Calu3 (cell line): ENCODE measurements at regions of chr7 and their contacts with region 1.

Region 1: DNA sequence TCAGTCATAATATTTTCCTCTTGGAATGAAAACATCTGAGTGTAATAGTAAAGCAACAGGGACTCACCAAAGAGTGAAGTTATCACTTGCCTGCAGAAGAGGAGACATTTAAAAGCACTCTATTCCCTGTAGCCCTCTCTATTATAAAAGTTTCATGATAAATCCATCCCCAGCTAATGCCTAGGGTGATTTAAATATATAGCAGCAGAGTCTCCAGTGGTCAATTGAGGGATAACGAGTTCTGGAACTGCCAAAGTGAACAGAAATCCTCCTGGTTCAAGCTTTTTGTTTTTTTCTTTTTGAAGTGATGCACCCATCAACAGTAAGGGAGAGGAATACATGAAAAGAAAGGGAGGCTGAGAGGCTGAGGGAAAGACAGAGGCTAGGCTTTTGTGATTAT is 87.3 kb downstream of the EVX1 start:
- DNase-seq: no peak
- H3K4me3 Mint-ChIP-seq: no peak overlapping the region
- H3K27ac Mint-ChIP-seq: no peak overlapping the region
- H3K4me1 Mint-ChIP-seq: no peaks in the 10 kb centered on the region
- H3K27me3 Mint-ChIP-seq: no peaks in the 10 kb centered on the region
- CTCF ChIP-seq: peak; percentile 46

Region 2: GRCh38 chr7:27314111-27314510 is 15.8 kb before region 1 on chr7:
- CTCF ChIA-PET with region 1: interaction called, 10 read pairs
- intact Hi-C with region 1: no loop called
- DNase-seq: peak; percentile 71
- H3K4me3 Mint-ChIP-seq: peak overlapping the region; percentile 31
- H3K27ac Mint-ChIP-seq: peak overlapping the region; percentile 89
- H3K4me1 Mint-ChIP-seq: peaks cover 34% of the 10 kb centered on the region
- H3K27me3 Mint-ChIP-seq: no peaks in the 10 kb centered on the region
- CTCF ChIP-seq: no peak

Region 3: GRCh38 chr7:27611043-27611442 is 281.1 kb after region 1 on chr7:
- CTCF ChIA-PET with region 1: no interaction called
- intact Hi-C with region 1: no loop called
- DNase-seq: no peak
- H3K4me3 Mint-ChIP-seq: no peak overlapping the region
- H3K27ac Mint-ChIP-seq: no peak overlapping the region
- H3K4me1 Mint-ChIP-seq: peaks cover 22% of the 10 kb centered on the region
- H3K27me3 Mint-ChIP-seq: no peaks in the 10 kb centered on the region
- CTCF ChIP-seq: no peak